Heart left ventricle (tissue), 16 donors: ENCODE measurements at regions of chr13 and their contacts with region 1.

Region 1: GRCh38 chr13:57918086-57918485 is 286.5 kb downstream of the PCDH17 start:
- DNase-seq: no peak
- ATAC-seq: no peak
- H3K4me3 ChIP-seq: no peak overlapping the region
- H3K27ac ChIP-seq: no peak overlapping the region
- H3K4me1 ChIP-seq: no peaks in the 10 kb centered on the region
- H3K27me3 ChIP-seq: no peaks in the 10 kb centered on the region
- CTCF ChIP-seq: no peak
- POLR2A ChIP-seq: no peak

Region 2: GRCh38 chr13:59721926-59722910 is 1804.1 kb after region 1 on chr13:
- intact Hi-C with region 1: loop called in 1 of 10 experiments (anchors 5 kb)
- DNase-seq: peak in 1 of 5 donors; percentile 20
- ATAC-seq: no peak
- H3K4me3 ChIP-seq: no peak overlapping the region
- H3K27ac ChIP-seq: no peak overlapping the region
- H3K4me1 ChIP-seq: no peaks in the 10 kb centered on the region
- H3K27me3 ChIP-seq: no peaks in the 10 kb centered on the region
- CTCF ChIP-seq: no peak
- POLR2A ChIP-seq: no peak